Thyroid gland (tissue), 4 donors: ENCODE measurements at regions of chr1 and their contacts with region 1.

Region 1: GRCh38 chr1:231232870-231233734 is 7.9 kb upstream of the GNPAT start:
- DNase-seq: no peak
- H3K4me3 ChIP-seq: no peak overlapping the region
- H3K27ac ChIP-seq: no peak overlapping the region
- H3K4me1 ChIP-seq: no peaks in the 10 kb centered on the region
- H3K27me3 ChIP-seq: no peaks in the 10 kb centered on the region
- CTCF ChIP-seq: no peak
- POLR2A ChIP-seq: no peak

Region 2: GRCh38 chr1:231260351-231260750 is 27.2 kb after region 1 on chr1:
- intact Hi-C with region 1: loop called (anchors 2 kb)
- DNase-seq: no peak
- H3K4me3 ChIP-seq: no peak overlapping the region
- H3K27ac ChIP-seq: no peak overlapping the region
- H3K4me1 ChIP-seq: no peaks in the 10 kb centered on the region
- H3K27me3 ChIP-seq: no peaks in the 10 kb centered on the region
- CTCF ChIP-seq: no peak
- POLR2A ChIP-seq: no peak

Region 3: DNA sequence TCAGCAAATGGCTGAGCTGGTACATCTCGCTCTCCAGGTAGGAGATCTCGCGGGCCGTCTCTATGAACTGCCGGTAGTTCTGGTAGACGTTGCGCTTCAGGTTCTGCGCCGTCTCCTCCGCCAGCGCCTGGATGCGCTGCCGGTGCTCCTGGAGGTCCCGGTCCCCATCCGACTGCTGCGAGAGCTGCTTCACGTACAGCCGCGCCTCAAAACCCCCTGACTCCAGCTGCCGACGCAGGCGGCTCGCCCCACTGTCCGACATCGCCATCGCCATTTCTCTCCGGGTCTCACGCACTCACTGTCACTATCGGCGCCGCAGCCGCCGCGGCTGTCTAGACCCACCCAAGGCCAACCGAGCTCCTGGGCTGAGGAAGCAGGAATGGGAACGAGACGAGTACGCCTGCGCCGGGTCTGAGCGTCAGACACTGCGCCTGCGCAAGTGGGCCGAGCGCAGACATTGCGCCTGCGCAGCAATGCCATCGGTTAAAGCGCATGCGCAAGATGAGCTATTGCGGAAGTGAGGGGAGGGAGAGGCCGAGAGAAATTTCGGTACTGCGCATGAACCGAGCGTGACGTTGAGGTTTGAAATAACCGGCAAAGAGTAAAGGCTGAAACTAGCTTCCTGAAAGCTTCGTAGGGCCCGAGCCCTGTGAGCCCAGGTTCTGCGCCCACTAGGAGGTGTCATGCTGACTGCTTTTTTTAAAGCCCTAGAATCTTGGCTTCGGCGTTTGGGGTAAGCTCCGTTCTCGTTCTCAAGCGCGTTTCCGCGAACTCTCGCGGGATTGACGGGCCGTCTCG is 104.6 kb after region 1 on chr1 and contains the start of gene EXOC8:
- intact Hi-C with region 1: loop called (anchors 10 kb)
- DNase-seq: peak; percentile 94 to 97
- H3K4me3 ChIP-seq: peak within 1 kb of the TSS; percentile 61 to 94 (median 67)
- H3K27ac ChIP-seq: peak within 1 kb of the TSS; percentile 76 to 95 (median 90)
- H3K4me1 ChIP-seq: peaks cover 43 to 45% of the 10 kb centered on the region in 2 donors
- H3K27me3 ChIP-seq: no peaks in the 10 kb centered on the region
- CTCF ChIP-seq: no peak
- POLR2A ChIP-seq: peak; percentile 30 to 89
- total RNA-seq, gene EXOC8: 15.9 to 30.5 (median 18.6) TPM